Head of caudate nucleus (tissue), 42 donors: ENCODE measurements at regions of chr11 and their contacts with region 1.

Region 1: DNA sequence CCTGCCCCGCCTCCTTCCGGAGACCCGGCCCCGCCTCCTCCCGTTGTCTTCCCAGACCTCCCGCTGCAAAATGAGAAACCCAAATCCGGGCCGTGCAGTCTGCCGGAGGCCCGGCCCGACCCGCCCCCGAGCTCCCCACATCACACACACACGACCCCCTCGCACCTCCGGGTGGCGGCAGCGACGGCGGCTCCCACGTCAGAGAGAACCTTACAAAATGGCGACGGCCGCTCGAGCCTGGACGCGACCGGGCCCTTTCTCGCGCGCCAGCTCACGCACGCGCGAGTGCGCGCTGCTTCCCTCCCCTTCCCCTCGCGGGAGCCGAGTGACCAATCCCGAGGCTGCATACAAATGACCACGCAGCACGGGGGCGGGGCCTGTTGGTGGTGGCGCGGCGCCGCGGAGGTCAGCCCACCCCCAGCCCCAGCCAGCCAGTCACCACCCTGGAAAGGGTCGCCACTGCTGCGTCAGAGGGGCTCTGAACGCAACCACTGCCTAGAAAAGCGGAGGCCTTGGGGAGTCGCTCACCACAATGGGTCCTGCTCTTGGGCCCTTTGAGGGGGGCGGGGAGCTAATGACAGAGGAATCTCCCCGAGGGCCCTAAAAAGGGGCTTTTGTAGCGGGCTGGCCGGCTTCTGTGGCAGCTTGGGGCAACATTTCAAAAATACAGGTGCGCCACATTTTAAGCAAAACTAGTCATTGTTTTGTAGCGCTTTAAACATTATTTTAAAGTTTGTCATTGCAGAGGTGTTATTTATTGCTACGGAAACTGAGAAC is at the start of gene RBM4B:
- DNase-seq: peak; percentile 94 to 99 (median 97)

Region 2: DNA sequence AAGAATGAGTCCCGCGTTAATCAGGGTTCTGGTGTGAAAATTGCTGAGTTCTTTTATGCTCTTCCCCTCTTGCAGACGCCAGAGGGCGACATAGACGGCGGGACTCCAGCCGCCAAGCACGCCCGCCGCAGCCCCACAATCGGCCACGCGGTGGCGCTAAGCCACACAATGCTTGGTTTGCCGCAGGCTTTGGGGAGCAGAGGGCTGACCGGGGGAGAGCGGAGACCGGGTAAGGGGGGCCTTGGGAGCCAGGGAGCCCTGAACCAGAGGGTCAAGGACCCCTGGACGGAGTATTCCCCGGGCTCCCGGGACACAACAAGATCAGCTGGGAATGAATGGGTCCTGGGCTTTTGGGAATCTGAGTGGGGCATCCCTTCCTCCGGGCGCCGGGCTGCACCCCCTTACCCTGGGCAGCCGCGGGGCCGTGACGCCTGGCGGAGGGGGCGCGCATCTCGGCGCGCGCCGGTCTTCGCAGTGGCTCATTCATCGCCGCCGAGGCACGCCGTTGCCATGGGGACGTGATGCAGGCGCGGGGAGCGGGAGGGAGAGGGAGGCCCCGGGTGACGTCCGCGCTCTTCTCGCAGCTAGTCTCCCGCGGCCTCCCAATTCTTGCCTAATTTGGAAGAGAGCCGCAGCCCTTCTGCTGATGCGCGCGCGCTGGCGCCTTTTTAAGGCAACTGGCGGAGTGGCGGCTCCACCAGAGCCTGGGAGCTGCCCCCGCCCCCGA is 269.1 kb before region 1 on chr11:
- intact Hi-C with region 1: loop called (anchors 10 kb)
- DNase-seq: peak; percentile 75 to 98 (median 92)

Region 3: GRCh38 chr11:66438504-66439466 is 239.0 kb before region 1 on chr11 and contains the start of gene MRPL11:
- intact Hi-C with region 1: loop called (anchors 2 kb)
- DNase-seq: peak; percentile 82 to 96 (median 91)

Region 4: GRCh38 chr11:66607126-66607834 is 70.5 kb before region 1 on chr11:
- intact Hi-C with region 1: no loop called
- DNase-seq: peak in 37 of 42 donors; percentile 15 to 79 (median 44)

Region 5: GRCh38 chr11:66638177-66639065 is 39.4 kb before region 1 on chr11 and contains the start of gene RBM4:
- intact Hi-C with region 1: loop called (anchors 5 kb)
- DNase-seq: peak; percentile 96 to 100 (median 99)